ENCODE measurements at regions of chr12 and their contacts with region 1.

Region 1: GRCh38 chr12:19507823-19508222 is 68.5 kb downstream of the AEBP2 start:
- DNase-seq: no peak
- ATAC-seq: no peak
- H3K4me3 Mint-ChIP-seq: no peak overlapping the region
- H3K27ac Mint-ChIP-seq: no peak overlapping the region
- H3K4me1 Mint-ChIP-seq: peaks cover 32% of the 10 kb centered on the region
- H3K27me3 Mint-ChIP-seq: no peaks in the 10 kb centered on the region

Region 2: GRCh38 chr12:19323805-19324204 is 184.0 kb before region 1 on chr12:
- CTCF ChIA-PET with region 1: no interaction called
- POLR2A ChIA-PET with region 1: no interaction called
- intact Hi-C with region 1: loop called in 1 of 2 experiments (anchors 1 kb)
- DNase-seq: no peak
- ATAC-seq: no peak
- H3K4me3 Mint-ChIP-seq: no peak overlapping the region
- H3K27ac Mint-ChIP-seq: no peak overlapping the region
- H3K4me1 Mint-ChIP-seq: no peaks in the 10 kb centered on the region
- H3K27me3 Mint-ChIP-seq: no peaks in the 10 kb centered on the region

Region 3: DNA sequence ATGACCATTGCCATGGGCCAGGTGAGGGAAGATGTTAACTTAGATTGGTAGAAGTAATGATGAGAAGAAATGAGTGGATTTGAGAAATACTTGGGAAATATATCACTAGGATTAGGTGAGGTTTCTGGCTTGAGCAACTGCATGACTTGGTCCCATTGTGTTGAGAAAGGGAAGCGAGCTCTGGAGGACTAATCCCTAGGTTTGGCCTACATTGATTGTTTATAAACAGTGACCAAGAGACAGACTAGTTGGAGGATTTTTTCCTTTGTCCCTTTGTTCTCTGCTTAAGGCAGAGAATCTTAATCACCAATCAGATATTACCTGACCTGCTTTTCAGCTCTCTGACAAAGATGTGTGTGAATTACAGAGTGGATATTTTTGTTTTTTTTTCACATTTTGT is 32.0 kb after region 1 on chr12:
- CTCF ChIA-PET with region 1: no interaction called
- POLR2A ChIA-PET with region 1: no interaction called
- intact Hi-C with region 1: no loop called
- DNase-seq: no peak
- ATAC-seq: no peak
- H3K4me3 Mint-ChIP-seq: no peak overlapping the region
- H3K27ac Mint-ChIP-seq: no peak overlapping the region
- H3K4me1 Mint-ChIP-seq: no peaks in the 10 kb centered on the region
- H3K27me3 Mint-ChIP-seq: no peaks in the 10 kb centered on the region

Measured in activated CD4-positive, alpha-beta T cell treated with anti-CD3 and anti-CD28 coated beads for 36 hours (primary cell).